ENCODE measurements at regions of chr16 and their contacts with region 1.

Region 1: DNA sequence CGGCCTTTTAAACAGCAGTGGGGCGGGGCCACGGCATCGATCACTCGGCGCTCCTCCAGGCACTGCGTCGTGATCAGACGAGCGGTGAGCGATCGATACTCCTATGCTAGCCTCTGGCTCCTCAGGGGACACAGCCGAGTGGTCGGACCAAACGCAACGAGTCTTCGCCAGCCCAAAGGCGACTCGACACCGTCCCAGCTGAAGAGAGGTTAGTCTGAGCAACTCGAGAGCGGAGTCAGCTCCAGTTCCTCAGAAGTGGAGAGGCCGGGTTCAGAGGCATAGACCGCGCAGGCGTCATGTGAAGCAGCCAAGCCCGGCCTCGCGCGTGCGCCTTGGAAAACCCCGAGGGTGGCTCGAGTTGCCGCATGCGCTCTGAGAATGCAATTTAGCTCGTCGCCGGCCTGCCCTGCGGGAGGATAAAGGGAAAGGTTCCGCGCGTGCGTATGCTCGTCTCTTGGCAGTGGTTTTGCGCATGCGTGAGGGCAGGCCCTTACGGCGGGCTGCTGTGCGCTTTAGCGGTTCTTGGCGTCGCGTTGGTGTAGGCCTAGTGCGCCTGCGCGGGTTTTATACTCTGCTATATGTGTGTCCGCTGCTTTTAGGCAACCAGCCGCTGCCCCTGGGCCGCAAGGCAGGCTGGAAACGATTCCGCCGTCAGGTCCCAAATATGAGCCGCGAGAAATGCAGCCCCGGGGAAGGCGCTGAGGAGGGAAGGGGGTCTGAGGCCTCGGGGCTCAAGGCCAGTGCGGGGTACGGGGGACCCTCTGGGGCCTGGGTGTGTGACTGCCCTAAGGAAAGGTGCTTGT is at the start of gene KDM8:
- DNase-seq: peak; percentile 100
- H3K4me3 Mint-ChIP-seq: peak within 1 kb of the TSS; percentile 97
- H3K27ac Mint-ChIP-seq: peak within 1 kb of the TSS; percentile 99
- H3K4me1 Mint-ChIP-seq: peaks cover 53% of the 10 kb centered on the region
- H3K27me3 Mint-ChIP-seq: no peaks in the 10 kb centered on the region
- total RNA-seq, gene KDM8: 12.5 and 14.5 TPM in 2 replicates

Region 2: GRCh38 chr16:27179500-27180072 is 24.0 kb before region 1 on chr16:
- intact Hi-C with region 1: loop called (anchors 1 kb)
- DNase-seq: peak; percentile 78
- H3K4me3 Mint-ChIP-seq: no peak overlapping the region
- H3K27ac Mint-ChIP-seq: no peak overlapping the region
- H3K4me1 Mint-ChIP-seq: peaks cover 32% of the 10 kb centered on the region
- H3K27me3 Mint-ChIP-seq: peaks cover 11% of the 10 kb centered on the region

Region 3: DNA sequence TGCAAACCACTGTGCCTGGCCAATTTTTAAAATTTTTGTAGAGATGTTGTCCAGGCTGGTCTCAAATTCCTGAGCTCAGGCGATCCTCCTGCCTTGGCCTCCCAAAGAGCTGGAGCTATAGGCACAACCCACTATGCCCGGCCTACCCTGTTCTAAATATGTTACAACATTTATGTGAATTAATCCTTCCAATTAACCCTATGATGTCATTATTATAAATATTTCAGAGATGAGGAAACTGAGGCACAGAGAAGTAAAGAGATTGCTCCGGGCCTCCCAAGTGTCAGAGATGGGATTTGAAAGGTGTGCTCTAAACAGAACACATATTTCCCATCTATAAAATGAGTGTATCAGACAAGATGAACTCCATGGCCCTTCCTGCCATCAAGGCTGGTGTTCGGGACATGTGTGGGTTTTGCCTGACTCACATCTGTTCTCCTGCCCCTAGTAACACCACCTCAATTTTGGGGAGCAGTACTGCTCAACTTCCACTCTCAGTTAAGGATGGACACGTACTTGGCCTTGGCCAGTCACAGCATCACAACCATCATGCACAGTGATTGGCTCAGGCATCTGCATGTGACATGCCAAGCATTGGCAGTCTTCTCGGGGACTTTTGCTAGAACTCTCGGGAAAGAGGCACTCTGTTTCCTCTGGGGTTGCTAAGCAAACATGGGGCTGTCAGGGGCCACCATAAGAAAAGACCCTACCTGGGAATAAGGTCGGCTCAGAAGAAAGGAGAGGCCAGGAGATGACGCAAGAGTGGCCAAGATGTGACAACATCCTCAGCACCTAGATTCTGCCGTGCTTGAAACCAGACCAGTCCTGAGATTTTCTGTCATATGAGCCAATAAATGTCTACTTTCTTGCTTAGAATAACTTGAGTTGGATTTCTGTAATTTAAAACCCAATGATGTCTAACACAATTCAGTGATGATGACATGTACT is 12.4 kb before region 1 on chr16:
- intact Hi-C with region 1: loop called (anchors 1 kb)
- DNase-seq: no peak
- H3K4me3 Mint-ChIP-seq: no peak overlapping the region
- H3K27ac Mint-ChIP-seq: no peak overlapping the region
- H3K4me1 Mint-ChIP-seq: peaks cover 13% of the 10 kb centered on the region
- H3K27me3 Mint-ChIP-seq: no peaks in the 10 kb centered on the region

Region 4: GRCh38 chr16:27268376-27269299 is 65.0 kb after region 1 on chr16 and contains the start of gene NSMCE1:
- intact Hi-C with region 1: loop called (anchors 1 kb)
- DNase-seq: peak; percentile 94
- H3K4me3 Mint-ChIP-seq: peak within 1 kb of the TSS; percentile 96
- H3K27ac Mint-ChIP-seq: peak within 1 kb of the TSS; percentile 97
- H3K4me1 Mint-ChIP-seq: peaks cover 75% of the 10 kb centered on the region
- H3K27me3 Mint-ChIP-seq: no peaks in the 10 kb centered on the region
- total RNA-seq, gene NSMCE1: 128 and 134 TPM in 2 replicates